ENCODE measurements at regions of chr10 and their contacts with region 1.

Region 1: GRCh38 chr10:114550756-114551635 is 107.1 kb downstream of the ABLIM1 start:
- DNase-seq: peak; percentile 81

Region 2: DNA sequence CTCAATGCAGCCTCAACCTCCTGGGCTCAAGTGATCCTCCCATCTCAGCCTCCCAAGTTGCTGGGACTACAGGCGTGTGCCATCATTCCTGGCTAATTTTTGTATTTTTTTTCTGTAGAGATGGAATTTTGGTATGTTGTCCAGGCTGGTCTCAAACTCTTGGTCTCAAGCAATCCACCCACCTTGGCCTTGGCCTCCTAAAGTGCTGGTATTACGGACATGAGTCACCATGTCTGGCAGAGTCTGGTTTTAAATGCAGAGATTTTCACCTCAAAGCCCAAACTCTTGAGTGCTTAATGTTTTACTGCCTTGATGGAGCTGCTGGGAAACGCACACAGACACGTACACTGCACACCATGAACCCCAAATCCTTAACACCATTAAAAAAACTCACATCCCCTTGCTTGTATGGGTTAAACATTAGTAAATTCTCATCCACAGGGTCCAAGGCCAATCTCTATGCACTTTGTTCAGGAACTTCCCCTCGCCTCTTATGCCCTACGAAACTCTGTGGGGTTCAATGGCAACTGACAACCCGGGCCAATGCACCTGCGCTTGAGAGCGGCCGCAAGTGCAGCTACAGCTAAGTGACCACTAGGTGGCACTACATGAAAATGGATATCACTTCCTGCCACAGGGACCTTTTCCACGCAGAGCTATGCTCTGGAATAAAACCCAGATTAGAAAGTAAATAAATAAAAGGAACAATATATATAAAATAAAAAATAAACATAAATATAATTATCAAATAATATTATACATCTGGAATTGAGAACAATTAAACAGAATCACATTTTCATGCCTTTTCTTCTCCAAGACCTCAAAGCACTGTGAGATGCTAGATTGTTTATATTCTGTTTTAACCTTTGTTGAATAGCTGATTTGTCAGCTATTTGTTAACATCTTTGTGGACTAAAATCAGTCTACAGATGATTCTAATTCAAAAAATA is 79.8 kb before region 1 on chr10:
- intact Hi-C with region 1: loop called in 1 of 2 experiments (anchors 10 kb)
- DNase-seq: peak; percentile 88

Region 3: DNA sequence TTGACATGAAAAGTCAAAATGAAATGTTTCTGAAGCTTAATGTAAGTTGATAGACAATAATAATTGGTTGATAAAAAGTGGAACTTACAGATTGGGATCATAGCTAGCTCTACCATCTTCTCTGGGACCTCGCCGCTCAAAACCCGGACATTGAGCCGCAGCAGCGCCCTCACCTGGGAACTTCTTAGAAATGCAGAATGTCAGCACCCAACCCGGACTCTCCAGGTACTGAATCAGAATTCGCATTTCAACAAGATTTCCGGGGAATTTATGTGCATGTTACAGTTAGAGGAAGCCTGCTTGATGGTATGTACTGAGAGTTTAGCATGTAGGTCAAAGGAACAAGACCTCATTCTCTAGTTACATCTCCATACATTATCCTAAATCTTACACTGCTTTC is 143.8 kb after region 1 on chr10:
- intact Hi-C with region 1: loop called in 1 of 2 experiments (anchors 5 kb)
- DNase-seq: no peak

Region 4: DNA sequence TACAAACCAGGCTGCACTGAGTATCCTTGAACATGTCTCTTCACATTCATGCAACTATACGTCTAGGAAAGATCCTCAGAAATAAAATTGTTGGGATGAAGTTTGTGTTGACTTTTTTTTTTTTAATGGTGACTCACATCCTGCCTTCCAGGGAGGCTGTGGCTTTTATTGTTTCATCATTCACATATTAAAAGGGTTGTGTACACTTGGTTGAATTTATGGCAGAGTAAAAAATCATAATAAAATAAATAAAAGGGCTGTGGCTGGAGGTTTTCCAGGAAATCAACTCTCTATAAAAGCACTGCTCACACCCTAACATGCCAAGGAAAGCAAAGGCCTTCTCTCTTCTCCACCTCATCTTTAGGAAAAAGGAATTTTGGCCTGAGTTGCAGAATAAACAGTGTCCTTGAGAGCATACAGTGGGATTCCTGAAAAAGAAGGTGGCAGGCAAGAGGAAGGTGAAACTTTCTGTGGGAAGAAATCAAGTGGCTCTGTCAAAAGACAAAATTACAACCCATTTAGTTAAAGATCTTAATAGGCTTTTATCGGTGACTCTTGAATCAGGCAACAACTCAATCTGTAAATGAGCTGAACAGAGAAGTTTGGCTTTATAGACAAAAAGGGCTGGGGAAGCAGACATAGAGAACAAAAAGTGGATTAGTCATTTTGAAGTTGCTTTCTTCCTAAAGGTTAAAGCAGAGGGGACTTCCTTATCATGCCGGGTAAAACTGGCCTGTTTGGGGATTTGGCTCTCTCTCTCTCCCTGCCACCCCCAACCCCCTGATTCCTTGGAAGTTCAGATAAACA is 229.0 kb after region 1 on chr10:
- intact Hi-C with region 1: loop called (anchors 5 to 10 kb)
- DNase-seq: no peak

Measured in posterior vena cava (tissue), 2 donors.